OCI-LY7 (cell line): ENCODE measurements at regions of chr10 and their contacts with region 1.

Region 1: GRCh38 chr10:119596537-119597404 is at the start of gene TIAL1:
- DNase-seq: peak; percentile 98
- H3K4me3 ChIP-seq: peak within 1 kb of the TSS; percentile 91
- H3K27ac ChIP-seq: peak within 1 kb of the TSS; percentile 84
- H3K4me1 ChIP-seq: peaks cover 44% of the 10 kb centered on the region
- CTCF ChIP-seq: no peak
- total RNA-seq, gene TIAL1: 61.1 and 67.6 TPM in 2 replicates

Region 2: GRCh38 chr10:118754720-118755480 is 841.9 kb before region 1 on chr10 and contains the start of gene CACUL1:
- CTCF ChIA-PET with region 1: no interaction called
- POLR2A ChIA-PET with region 1: no interaction called
- intact Hi-C with region 1: loop called (anchors 10 kb)
- DNase-seq: peak; percentile 99
- H3K4me3 ChIP-seq: peak within 1 kb of the TSS; percentile 98
- H3K27ac ChIP-seq: peak within 1 kb of the TSS; percentile 60
- H3K4me1 ChIP-seq: peaks cover 26% of the 10 kb centered on the region
- CTCF ChIP-seq: no peak
- total RNA-seq, gene CACUL1: 12.0 and 12.8 TPM in 2 replicates

Region 3: DNA sequence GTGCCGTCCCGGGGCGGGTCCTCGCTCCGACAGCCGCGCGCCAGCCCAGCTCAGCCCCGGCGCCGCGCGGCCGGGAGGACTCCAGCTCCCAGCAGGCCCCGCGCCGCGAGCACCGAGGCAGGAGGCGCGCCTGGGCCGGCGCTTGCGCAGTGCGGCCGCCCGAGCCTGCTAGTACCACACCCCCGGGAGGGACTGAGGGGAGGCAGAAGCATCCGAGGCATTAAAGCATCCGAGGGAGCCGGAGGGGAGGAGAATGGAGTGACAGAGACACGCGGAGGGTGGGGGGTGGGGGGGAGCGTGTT is 389.5 kb before region 1 on chr10 and contains the start of gene GRK5:
- CTCF ChIA-PET with region 1: no interaction called
- POLR2A ChIA-PET with region 1: no interaction called
- intact Hi-C with region 1: loop called (anchors 2 kb)
- DNase-seq: peak; percentile 98
- H3K4me3 ChIP-seq: peak within 1 kb of the TSS; percentile 75
- H3K27ac ChIP-seq: peak within 1 kb of the TSS; percentile 69
- H3K4me1 ChIP-seq: peaks cover 28% of the 10 kb centered on the region
- CTCF ChIP-seq: no peak
- total RNA-seq, gene GRK5: 4.2 and 4.7 TPM in 2 replicates

Region 4: GRCh38 chr10:119567978-119568377 is 28.8 kb before region 1 on chr10:
- CTCF ChIA-PET with region 1: no interaction called
- POLR2A ChIA-PET with region 1: interaction called, 10 read pairs
- intact Hi-C with region 1: no loop called
- DNase-seq: peak; percentile 9
- H3K4me3 ChIP-seq: no peak overlapping the region
- H3K27ac ChIP-seq: no peak overlapping the region
- H3K4me1 ChIP-seq: peaks cover 22% of the 10 kb centered on the region
- CTCF ChIP-seq: no peak

Region 5: DNA sequence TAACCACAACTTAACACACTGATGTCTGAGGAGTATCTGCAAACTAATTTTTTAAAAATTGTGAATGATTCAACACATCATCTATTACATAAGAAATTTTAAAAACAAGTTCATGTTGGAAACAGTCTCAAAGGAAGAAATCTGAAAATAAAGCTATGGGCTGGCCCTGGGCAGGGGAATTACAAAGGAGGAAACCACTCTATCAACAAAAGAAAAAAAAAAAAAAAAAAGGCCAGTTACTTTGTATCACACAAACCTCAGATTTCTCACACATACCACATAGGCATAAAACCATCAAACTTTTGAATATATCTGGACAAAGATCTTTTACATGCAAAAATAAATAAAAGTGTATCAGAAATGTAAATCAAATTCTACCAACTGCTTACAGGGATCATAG is 20.8 kb before region 1 on chr10:
- CTCF ChIA-PET with region 1: no interaction called
- POLR2A ChIA-PET with region 1: interaction called, 31 read pairs
- intact Hi-C with region 1: no loop called
- DNase-seq: no peak
- H3K4me3 ChIP-seq: no peak overlapping the region
- H3K27ac ChIP-seq: no peak overlapping the region
- H3K4me1 ChIP-seq: no peaks in the 10 kb centered on the region
- CTCF ChIP-seq: no peak

Region 6: GRCh38 chr10:119650692-119651513 is 54.1 kb after region 1 on chr10 and contains the start of gene BAG3:
- CTCF ChIA-PET with region 1: no interaction called
- POLR2A ChIA-PET with region 1: no interaction called
- intact Hi-C with region 1: loop called (anchors 5 kb)
- DNase-seq: peak; percentile 80
- H3K4me3 ChIP-seq: peak within 1 kb of the TSS; percentile 86
- H3K27ac ChIP-seq: peak within 1 kb of the TSS; percentile 48
- H3K4me1 ChIP-seq: peaks cover 16% of the 10 kb centered on the region
- CTCF ChIP-seq: no peak
- total RNA-seq, gene BAG3: 0.41 and 1.9 TPM in 2 replicates